HCT116 (cell line): ENCODE measurements at regions of chr1 and their contacts with region 1.

Region 1: GRCh38 chr1:109671067-109671466 is 3.2 kb downstream of the GSTM2 start:
- DNase-seq: no peak
- ATAC-seq: no peak
- H3K4me3 ChIP-seq: no peak overlapping the region
- H3K27ac ChIP-seq: no peak overlapping the region
- H3K4me1 ChIP-seq: no peaks in the 10 kb centered on the region
- H3K27me3 ChIP-seq: no peaks in the 10 kb centered on the region
- CTCF ChIP-seq: no peak
- POLR2A ChIP-seq: no peak
- RAD21 ChIP-seq: no peak

Region 2: GRCh38 chr1:109705418-109705817 is 34.4 kb after region 1 on chr1:
- CTCF ChIA-PET with region 1: no interaction called
- POLR2A ChIA-PET with region 1: no interaction called
- RAD21 ChIA-PET with region 1: no interaction called
- intact Hi-C with region 1: loop called (anchors 5 kb)
- DNase-seq: no peak
- ATAC-seq: no peak
- H3K4me3 ChIP-seq: no peak overlapping the region
- H3K27ac ChIP-seq: no peak overlapping the region
- H3K4me1 ChIP-seq: no peaks in the 10 kb centered on the region
- H3K27me3 ChIP-seq: no peaks in the 10 kb centered on the region
- CTCF ChIP-seq: no peak
- POLR2A ChIP-seq: no peak
- RAD21 ChIP-seq: no peak